GM10248 (cell line): ENCODE measurements at regions of chr20 and their contacts with region 1.

Region 1: DNA sequence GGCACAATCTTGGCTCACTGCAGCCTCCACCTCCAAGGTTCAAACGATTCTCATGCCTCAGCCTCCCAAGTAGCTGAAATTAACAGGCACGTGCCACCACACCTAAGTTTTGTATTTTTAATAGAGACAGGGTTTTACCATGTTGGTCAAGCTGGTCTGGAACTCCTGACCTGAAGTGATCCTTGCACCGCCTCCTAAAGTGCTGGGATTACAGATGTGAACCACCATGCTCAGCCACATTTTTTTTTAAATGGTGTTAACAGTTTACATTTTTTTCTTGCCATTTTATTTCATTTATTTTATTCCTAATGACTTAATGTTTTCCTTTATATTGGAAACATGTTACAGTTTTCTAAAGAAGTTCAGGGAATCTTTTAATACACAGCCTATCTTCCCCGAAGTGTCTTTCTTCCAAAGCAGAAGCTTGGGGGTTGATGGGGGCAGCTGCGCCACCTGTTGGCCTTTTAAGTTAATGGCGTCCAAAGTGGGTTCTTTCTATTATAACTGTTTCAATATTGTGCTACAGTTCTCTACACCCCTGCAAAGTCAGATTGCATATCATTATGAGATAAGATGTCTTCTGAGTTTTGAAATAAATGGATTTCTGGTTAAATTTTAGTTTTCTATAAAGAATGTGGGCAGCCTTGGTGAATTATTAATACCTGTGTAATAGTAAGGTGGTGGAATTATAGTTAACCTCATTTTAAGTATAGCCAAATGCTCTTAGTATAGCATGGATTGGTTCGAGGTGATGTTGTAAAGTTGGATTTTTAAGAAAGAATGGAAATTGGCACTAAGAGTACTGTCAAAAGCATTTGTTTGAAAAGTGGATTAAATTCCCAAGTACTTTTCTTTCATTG is 42.0 kb upstream of the PLCG1 start:
- DNase-seq: peak; percentile 53
- CTCF ChIP-seq: peak; percentile 73

Region 2: DNA sequence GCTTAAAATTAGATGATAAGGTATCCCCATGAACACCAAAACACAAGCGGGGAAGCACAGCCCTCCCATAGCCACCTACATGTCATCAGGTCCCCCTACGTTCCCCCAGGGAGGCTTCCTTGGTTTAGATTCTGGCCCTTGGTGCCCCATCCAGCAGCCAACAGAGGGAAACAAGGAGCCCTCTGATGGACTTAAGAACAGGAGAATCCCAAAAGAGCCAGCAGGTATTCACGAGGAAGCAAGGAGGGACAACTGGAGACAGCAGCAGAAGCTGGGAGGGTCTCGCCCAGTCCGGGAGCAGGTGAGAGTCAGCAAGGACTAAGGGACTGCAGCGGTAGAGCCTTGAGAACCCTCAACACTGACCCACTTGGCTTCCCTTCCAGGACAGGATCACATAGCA is 125.1 kb before region 1 on chr20:
- CTCF ChIA-PET with region 1: interaction called, 59 read pairs
- POLR2A ChIA-PET with region 1: no interaction called
- DNase-seq: no peak
- CTCF ChIP-seq: peak; percentile 23

Region 3: DNA sequence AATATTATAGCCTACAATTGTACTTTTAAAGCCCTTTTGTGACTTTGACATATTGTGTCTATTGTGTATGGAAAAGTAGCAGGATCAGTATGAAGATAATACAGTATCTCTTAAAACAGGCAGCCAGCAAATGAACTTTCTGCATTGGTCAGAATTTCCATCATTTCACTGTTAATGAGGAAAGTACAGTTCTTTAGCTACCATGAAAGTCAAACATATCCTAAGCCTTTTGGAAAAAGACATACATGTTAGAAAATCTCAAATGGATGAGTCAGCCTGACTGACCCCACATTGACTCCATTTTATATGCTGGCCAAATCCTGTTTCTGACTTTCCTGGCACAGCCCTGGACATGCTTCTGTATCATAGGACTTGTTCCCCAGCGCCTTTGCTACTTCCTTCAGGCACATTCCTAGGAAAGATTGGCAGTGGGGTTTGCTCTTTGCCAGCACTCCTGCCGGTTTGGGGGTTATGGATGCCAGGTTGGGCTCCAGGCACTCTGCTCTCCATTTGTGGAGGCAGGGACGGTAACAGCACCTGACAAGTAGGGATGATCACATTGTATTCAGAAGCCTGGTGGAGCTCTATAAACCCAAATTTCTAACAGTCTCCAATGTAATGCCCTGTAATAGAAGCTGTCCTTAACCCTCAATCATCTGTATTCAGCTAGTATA is 23.0 kb before region 1 on chr20:
- CTCF ChIA-PET with region 1: interaction called, 18 read pairs
- POLR2A ChIA-PET with region 1: no interaction called
- DNase-seq: no peak
- CTCF ChIP-seq: no peak

Region 4: GRCh38 chr20:41110930-41111577 is 15.7 kb after region 1 on chr20:
- CTCF ChIA-PET with region 1: interaction called, 12 read pairs
- POLR2A ChIA-PET with region 1: no interaction called
- DNase-seq: no peak
- CTCF ChIP-seq: no peak

Region 5: DNA sequence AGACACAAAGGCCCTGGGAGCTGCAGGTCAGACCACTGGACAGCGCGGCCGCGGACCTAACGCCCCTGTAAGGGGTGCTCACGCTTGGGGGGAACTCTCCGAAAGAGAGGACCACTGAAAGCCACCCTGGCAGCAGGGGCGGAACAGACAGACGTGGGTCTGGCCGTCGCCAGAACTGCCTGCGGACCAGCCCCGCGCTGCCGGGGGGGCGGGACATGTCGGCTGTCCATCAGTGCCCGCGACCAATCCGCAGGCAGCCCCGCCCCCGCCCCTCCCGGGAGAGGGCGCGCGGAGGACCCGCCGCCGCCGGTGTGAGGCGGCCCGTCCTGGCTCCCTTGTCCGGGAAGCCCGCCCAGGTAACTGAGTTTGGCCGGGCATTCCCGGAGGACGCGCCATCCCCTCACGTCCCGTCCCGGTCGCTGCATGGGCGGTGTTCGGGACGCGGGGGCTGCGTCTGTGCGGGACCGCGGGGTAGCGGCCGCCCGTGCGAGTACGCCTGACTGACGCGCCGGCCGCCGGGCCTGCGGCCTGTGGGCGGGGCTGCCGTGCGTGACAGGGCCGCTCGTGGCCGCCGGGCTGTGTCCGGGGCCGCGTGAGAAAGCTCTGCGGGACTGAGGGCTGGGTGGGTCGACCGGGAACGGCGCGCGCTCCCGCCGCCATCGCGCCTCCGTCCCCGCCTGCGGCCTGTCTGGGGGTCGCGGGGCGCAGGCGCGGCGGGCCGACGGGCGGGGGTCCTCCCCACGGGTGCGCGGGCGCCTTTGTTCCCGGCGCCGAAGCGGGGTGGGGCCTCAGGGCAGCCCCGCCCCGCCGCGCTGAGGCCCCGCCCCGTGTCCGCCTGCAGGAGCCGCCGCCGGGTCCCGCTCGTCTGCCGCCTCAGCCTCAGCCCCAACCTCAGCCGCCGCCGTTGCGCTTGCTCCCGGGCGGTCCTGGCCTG is 41.6 kb after region 1 on chr20 and contains the start of gene PLCG1:
- CTCF ChIA-PET with region 1: interaction called, 10 read pairs
- POLR2A ChIA-PET with region 1: no interaction called
- DNase-seq: peak; percentile 95
- CTCF ChIP-seq: no peak